Activated T-helper 2 cell treated with anti-CD3 and anti-CD28 coated beads, Interferon-gamma antibody, Interleukin-2, Interleukin-4, amounts not matched to agents 10 μg/mL and 5 μg/mL and 100 μg/mL, durations not matched to agents 14 hours and 24 hours and 36 hours (primary cell): ENCODE measurements at regions of chr15 and their contacts with region 1.

Region 1: DNA sequence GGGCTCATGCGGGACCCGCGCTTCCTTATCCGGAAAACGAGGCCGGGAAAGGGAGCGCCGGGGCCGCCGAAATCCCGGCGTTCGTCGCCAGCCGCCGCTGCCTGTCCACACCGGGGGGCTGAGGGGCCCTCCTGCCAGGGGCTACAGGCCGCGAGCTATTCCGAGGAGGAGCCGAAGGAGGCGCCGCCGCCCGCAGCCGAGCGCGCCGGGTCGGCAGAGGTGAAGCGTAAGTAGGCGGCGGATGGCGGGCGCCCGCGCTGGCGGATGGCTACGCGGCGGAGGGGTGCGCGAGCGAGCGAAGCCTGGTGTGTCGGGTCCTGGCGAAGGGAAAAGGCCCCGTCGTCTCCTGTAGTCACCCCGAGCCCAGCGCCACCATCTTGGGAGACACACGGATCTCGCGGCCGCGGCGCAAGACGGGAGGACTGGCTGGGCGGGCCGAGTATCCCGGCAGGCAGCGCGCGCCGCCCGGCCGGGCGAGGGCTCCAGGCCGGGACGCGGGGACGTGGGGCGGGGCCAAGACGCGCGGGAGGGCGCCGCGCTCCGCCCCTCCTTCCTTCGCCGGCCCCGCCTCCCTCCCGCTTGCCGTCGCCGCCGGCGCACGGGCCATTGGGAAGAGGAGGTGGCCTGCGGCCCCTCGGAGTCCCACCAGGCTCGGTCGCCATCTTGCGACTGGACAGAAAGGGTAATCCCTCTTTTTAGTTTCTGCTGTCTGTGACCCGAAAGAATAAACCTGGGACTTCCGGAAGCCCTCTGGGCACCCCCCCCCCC is at the start of gene UBE3A:
- DNase-seq: peak; percentile 84
- H3K4me3 Mint-ChIP-seq: peak within 1 kb of the TSS; percentile 92
- H3K27ac Mint-ChIP-seq: peak within 1 kb of the TSS; percentile 90
- H3K4me1 Mint-ChIP-seq: peaks cover 22% of the 10 kb centered on the region
- H3K27me3 Mint-ChIP-seq: no peaks in the 10 kb centered on the region
- total RNA-seq, gene UBE3A: 107 and 108 TPM in 2 replicates

Region 2: GRCh38 chr15:24772686-24773373 is 666.0 kb before region 1 on chr15:
- intact Hi-C with region 1: loop called (anchors 5 kb)
- DNase-seq: peak; percentile 40
- H3K4me3 Mint-ChIP-seq: peak overlapping the region; percentile 80
- H3K27ac Mint-ChIP-seq: peak overlapping the region; percentile 73
- H3K4me1 Mint-ChIP-seq: peaks cover 1% of the 10 kb centered on the region
- H3K27me3 Mint-ChIP-seq: no peaks in the 10 kb centered on the region

Region 3: GRCh38 chr15:25368850-25369249 is 69.9 kb before region 1 on chr15:
- intact Hi-C with region 1: loop called (anchors 5 kb)
- DNase-seq: no peak
- H3K4me3 Mint-ChIP-seq: no peak overlapping the region
- H3K27ac Mint-ChIP-seq: no peak overlapping the region
- H3K4me1 Mint-ChIP-seq: peaks cover 12% of the 10 kb centered on the region
- H3K27me3 Mint-ChIP-seq: no peaks in the 10 kb centered on the region

Region 4: GRCh38 chr15:25724899-25725298 is 286.1 kb after region 1 on chr15:
- intact Hi-C with region 1: loop called (anchors 5 kb)
- DNase-seq: no peak
- H3K4me3 Mint-ChIP-seq: no peak overlapping the region
- H3K27ac Mint-ChIP-seq: no peak overlapping the region
- H3K4me1 Mint-ChIP-seq: no peaks in the 10 kb centered on the region
- H3K27me3 Mint-ChIP-seq: no peaks in the 10 kb centered on the region

Region 5: GRCh38 chr15:26082221-26083109 is 643.7 kb after region 1 on chr15:
- intact Hi-C with region 1: loop called (anchors 2 kb)
- DNase-seq: peak; percentile 93
- H3K4me3 Mint-ChIP-seq: peak overlapping the region; percentile 85
- H3K27ac Mint-ChIP-seq: peak overlapping the region; percentile 89
- H3K4me1 Mint-ChIP-seq: peaks cover 18% of the 10 kb centered on the region
- H3K27me3 Mint-ChIP-seq: peaks cover 8% of the 10 kb centered on the region